Transverse colon (tissue), 4 donors: ENCODE measurements at regions of chr6 and their contacts with region 1.

Region 1: GRCh38 chr6:119562168-119562567 is 212.6 kb upstream of the MAN1A1 start:
- DNase-seq: no peak
- H3K4me3 ChIP-seq: no peak overlapping the region
- H3K27ac ChIP-seq: no peak overlapping the region
- H3K4me1 ChIP-seq: no peaks in the 10 kb centered on the region
- H3K27me3 ChIP-seq: no peaks in the 10 kb centered on the region
- CTCF ChIP-seq: no peak
- EP300 ChIP-seq: no peak
- POLR2A ChIP-seq: no peak

Region 2: GRCh38 chr6:118580585-118581419 is 981.4 kb before region 1 on chr6:
- in situ Hi-C with region 1: no loop called
- intact Hi-C with region 1: loop called (anchors 5 kb)
- DNase-seq: no peak
- H3K4me3 ChIP-seq: no peak overlapping the region
- H3K27ac ChIP-seq: no peak overlapping the region
- H3K4me1 ChIP-seq: peaks cover 0 to 7% (median 2%) of the 10 kb centered on the region in 4 donors
- H3K27me3 ChIP-seq: no peaks in the 10 kb centered on the region
- CTCF ChIP-seq: peak; percentile 67 to 76 (median 73)
- EP300 ChIP-seq: no peak
- POLR2A ChIP-seq: no peak